ENCODE measurements at regions of chr19 and their contacts with region 1.

Region 1: DNA sequence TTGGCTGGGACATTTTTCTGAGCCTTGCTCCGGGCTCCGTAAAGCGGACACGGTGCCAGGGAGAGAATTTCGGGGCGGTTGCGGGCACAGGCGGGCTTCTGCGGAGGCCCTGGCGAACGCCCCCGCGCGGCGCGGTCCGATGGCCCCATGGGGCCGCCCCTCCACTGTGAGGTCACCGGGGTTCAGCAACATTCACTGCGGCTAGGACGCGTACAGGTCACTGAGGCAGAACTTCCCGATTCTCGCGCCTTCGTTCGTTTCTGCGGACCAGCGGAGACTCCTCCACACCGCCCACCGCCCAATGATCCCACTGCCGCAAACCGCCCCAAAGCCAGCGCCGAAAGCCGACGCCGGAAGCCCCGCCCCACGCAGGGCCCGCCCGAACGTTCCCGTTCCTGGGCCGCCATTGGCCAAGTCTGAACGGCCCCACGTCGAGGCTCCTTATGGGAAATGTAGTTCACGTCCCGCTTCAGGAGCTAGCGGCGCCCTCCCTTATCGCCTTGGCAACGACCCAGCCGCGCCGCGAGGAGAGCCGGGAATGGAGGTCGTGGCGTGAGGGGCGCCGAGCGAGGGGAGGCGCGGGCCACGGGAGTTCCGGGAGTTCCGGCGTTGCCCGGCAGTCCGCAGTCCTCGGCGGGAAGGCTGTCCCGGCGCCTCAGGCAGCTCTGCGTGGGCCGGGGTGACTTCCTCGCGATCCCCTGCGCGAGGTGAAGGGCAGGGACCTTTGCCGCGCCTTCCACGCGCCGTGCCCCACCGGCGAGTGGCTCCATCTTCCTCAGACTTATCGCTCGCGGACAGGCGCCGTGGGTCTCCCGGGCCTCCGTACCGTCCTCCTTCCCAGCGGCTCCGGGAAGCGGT is at the start of gene ZNF584:
- DNase-seq: peak; percentile 97
- H3K4me3 ChIP-seq: peak within 1 kb of the TSS; percentile 65 to 93 (median 84)
- H3K27ac ChIP-seq: peak within 1 kb of the TSS; percentile 87 to 91 (median 91)
- H3K4me1 ChIP-seq: peaks cover 0 to 26% (median 21%) of the 10 kb centered on the region in 4 donors
- H3K27me3 ChIP-seq: no peaks in the 10 kb centered on the region
- CTCF ChIP-seq: no peak
- EP300 ChIP-seq: no peak
- POLR2A ChIP-seq: peak; percentile 53 to 79
- total RNA-seq, gene ZNF584: 8.2 to 21.4 (median 12.0) TPM

Region 2: DNA sequence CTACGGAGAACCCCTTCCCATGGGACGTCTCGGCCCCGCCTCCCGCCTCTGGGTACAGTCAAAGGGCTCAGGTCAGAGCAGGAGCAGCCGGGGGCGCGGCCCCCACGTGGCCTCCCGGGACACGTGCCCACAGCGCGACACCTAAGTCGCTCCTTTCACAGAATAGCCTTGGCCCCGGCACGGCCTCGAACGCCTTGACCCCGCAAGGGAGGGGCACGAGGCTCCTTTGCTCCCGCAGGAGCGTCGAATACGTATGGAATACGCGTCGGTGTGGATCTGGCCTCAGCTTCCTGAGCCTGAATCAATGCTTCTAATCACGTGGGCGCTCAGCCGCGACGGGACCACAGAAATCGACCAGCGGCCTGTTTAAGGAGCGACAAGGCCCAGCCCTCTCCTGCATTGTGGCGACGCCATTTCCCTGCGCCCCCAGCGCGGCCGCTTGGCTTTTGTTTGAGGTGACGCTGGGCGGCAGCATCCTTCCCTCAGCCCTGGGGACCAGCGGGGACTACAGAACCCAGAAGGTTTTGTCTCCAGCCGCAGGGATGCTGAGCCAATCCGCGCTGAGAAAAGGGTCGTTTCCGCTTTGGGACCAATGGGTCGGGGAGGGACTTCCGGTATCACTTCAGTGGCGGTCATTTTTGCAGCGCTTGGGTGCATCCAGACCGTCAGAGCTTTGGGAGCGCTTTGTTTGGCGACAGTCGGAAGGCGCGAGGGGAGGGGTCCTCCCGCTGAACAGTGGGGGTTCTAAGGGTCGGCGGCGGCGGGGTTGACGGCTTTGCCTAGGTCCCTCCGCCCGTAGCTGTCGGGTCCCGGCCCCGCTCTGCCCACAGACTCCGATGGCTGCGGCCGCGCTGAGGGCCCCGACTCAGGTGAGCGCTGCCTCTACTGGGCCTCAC is 824.6 kb before region 1 on chr19 and contains the start of gene ZIK1:
- intact Hi-C with region 1: no loop called
- DNase-seq: peak; percentile 95
- H3K4me3 ChIP-seq: peak within 1 kb of the TSS; percentile 54 to 69 (median 63)
- H3K27ac ChIP-seq: peak within 1 kb of the TSS; percentile 23 to 72 (median 63)
- H3K4me1 ChIP-seq: peaks cover 0 to 26% (median 15%) of the 10 kb centered on the region in 4 donors
- H3K27me3 ChIP-seq: no peaks in the 10 kb centered on the region
- CTCF ChIP-seq: no peak
- EP300 ChIP-seq: no peak
- POLR2A ChIP-seq: no peak
- total RNA-seq, gene ZIK1: 4.8 to 10.5 (median 5.9) TPM

Region 3: DNA sequence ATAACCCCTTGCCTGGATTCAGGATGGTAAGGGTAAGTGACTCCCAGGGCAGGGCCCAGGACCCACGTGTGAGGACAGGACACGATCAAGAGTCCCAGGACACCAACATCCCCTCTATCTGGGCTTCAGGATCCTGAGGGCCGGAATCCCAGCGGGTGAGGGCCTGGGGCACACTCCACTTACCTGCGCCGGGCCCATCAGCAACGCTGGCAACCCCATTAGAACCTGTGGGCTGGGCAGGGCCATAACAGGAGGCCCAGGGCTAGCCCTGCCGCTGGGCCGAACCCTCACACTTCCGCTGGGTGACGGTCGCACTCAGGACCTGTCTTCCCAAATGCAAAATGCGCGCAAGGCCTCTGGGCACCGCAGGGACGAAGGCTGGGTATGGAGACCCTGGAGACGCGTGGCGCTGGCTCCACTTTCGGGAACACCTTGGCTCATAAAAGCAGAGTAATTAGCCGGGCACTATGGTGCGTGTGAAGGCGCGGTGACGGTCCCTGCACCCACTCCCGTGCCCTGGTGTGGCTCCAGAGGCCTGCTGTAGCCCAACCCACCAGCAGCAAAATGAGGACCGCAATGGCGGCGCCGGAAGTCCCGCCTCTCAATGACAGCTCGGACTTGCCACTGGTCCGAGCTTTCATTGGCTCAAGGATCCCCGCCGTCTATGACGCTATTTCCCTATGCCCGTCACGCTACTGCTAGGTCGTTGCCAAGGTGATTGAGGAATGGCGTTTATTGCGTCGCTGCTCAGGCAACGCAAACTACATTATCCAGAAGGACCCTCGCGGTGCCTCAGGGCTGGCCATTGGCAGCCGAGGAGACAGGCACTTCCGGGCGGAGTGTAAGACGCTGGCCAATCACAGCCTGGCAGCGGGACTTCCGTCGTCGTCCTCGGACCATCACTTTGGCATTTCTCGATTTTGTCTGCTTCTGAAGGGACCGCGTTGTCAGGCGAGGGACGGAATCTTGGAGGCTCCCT is 31.5 kb after region 1 on chr19 and contains the start of gene ZNF132:
- intact Hi-C with region 1: loop called (anchors 2 kb)
- DNase-seq: peak; percentile 99
- H3K4me3 ChIP-seq: peak within 1 kb of the TSS; percentile 49 to 72 (median 67)
- H3K27ac ChIP-seq: peak within 1 kb of the TSS; percentile 80 to 89 (median 84)
- H3K4me1 ChIP-seq: peaks cover 0 to 23% (median 16%) of the 10 kb centered on the region in 4 donors
- H3K27me3 ChIP-seq: no peaks in the 10 kb centered on the region
- CTCF ChIP-seq: no peak
- EP300 ChIP-seq: peak in 1 of 4 donors; percentile 60
- POLR2A ChIP-seq: no peak
- total RNA-seq, gene ZNF132: 5.3 to 12.2 (median 6.4) TPM

Region 4: DNA sequence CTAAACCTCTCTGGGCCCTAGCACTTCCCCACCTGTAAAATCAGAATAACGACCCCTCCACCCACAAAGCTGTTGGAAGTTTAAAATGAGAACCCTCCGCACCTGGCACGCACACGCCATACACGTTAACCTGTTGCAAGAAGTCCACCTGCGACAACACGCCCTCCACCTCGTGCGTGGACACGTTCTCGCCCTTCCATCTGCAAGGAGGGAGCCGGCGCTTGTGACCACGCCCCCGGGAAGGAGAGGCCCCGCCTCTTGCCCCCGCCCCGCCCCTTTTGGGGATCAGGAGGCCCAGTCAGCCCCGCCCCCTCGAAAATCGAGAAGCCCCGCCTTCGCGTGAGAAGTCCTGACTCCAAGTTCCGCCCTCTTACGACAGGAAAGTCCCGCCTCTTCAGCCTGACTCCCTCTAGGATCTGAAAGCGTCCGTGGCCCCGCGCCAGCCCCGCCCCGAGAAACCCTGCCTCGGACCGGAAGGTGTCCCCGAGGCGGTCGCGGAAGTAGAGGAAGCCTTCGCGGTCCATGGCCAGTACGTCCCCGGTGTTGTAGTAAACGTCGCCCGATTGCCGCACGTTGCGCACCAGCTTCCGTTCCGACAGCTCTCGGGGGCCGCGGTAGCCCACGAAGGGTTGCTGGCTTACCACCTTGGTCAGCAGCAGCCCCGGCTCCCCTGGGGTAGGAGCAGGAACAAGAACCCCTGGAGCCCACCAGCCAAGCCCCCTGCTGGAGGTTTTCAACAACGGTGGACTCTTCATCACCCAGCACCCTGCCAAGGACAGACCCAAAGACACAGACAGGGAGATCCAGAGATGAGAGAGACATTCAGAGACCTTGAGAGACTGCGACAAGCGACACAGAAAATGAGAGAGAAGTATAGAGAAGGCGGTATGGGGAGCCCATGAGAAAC is 90.9 kb after region 1 on chr19:
- intact Hi-C with region 1: no loop called
- DNase-seq: peak; percentile 100
- H3K4me3 ChIP-seq: peak overlapping the region; percentile 48 to 60 (median 54)
- H3K27ac ChIP-seq: peak overlapping the region; percentile 76 to 85 (median 80)
- H3K4me1 ChIP-seq: peaks cover 0 to 23% (median 20%) of the 10 kb centered on the region in 4 donors
- H3K27me3 ChIP-seq: no peaks in the 10 kb centered on the region
- CTCF ChIP-seq: no peak
- EP300 ChIP-seq: no peak
- POLR2A ChIP-seq: no peak

Region 5: GRCh38 chr19:58558623-58559274 is 150.4 kb after region 1 on chr19:
- intact Hi-C with region 1: no loop called
- DNase-seq: peak; percentile 100
- H3K4me3 ChIP-seq: peak overlapping the region; percentile 61 to 84 (median 82)
- H3K27ac ChIP-seq: peak overlapping the region; percentile 99 to 100 (median 100)
- H3K4me1 ChIP-seq: peaks cover 0 to 72% (median 67%) of the 10 kb centered on the region in 4 donors
- H3K27me3 ChIP-seq: no peaks in the 10 kb centered on the region
- CTCF ChIP-seq: no peak
- EP300 ChIP-seq: peak in 1 of 4 donors; percentile 20
- POLR2A ChIP-seq: peak in 1 of 2 donors; percentile 65

Measured in sigmoid colon (tissue), 7 donors.